ENCODE measurements at regions of chr10 and their contacts with region 1.

Region 1: DNA sequence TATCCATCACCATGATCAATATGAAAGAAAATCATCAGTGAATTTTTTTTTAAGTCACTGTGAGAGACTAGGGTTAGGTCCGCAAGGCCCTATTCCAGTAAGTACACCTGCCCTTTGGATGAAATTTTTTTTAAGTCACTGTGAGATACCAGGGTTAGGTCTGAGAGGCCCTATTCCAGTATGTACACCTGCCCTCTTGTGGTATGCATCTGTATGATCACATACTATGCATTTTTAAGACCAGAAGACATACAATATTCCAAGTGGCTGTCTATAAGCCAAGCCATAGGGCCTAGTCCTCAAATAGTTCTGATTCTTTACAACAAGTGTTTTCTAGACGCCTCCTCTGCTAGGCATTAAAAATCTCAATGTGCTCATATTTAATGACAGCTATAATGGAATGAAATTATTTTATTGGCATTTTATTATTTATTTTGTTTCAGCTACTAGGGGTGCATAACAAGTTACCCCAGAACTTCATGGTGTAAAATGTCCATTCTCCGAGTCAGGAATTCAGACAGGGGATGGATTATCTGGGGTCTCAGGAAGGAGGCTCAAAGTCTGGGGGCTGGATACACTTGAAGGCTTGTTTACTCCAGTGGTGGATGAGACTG is 53.1 kb downstream of the TEX36 start:
- DNase-seq: no peak
- H3K4me3 ChIP-seq: no peak overlapping the region
- H3K27ac ChIP-seq: no peak overlapping the region
- H3K4me1 ChIP-seq: no peaks in the 10 kb centered on the region
- H3K27me3 ChIP-seq: peaks cover 0 to 37% (median 0%) of the 10 kb centered on the region in 4 donors
- CTCF ChIP-seq: peak in 5 of 6 experiments; percentile 30 to 63 (median 36)
- POLR2A ChIP-seq: no peak

Region 2: GRCh38 chr10:125165584-125166573 is 464.0 kb before region 1 on chr10:
- intact Hi-C with region 1: loop called (anchors 5 kb)
- DNase-seq: no peak
- H3K4me3 ChIP-seq: no peak overlapping the region
- H3K27ac ChIP-seq: no peak overlapping the region
- H3K4me1 ChIP-seq: peaks cover 0 to 18% (median 0%) of the 10 kb centered on the region in 3 donors
- H3K27me3 ChIP-seq: peaks cover 0 to 10% (median 0%) of the 10 kb centered on the region in 4 donors
- CTCF ChIP-seq: no peak
- POLR2A ChIP-seq: no peak

Measured in esophagus squamous epithelium (tissue), 5 donors.